ENCODE measurements at regions of chr9 and their contacts with region 1.

Region 1: GRCh38 chr9:72038890-72039410 is 21.5 kb downstream of the C9orf57 start:
- DNase-seq: peak; percentile 68 to 73
- H3K4me3 ChIP-seq: no peak overlapping the region
- H3K27ac ChIP-seq: no peak overlapping the region
- H3K4me1 ChIP-seq: no peaks in the 10 kb centered on the region
- H3K27me3 ChIP-seq: no peaks in the 10 kb centered on the region
- CTCF ChIP-seq: peak; percentile 84 to 93 (median 89)
- POLR2A ChIP-seq: no peak

Region 2: DNA sequence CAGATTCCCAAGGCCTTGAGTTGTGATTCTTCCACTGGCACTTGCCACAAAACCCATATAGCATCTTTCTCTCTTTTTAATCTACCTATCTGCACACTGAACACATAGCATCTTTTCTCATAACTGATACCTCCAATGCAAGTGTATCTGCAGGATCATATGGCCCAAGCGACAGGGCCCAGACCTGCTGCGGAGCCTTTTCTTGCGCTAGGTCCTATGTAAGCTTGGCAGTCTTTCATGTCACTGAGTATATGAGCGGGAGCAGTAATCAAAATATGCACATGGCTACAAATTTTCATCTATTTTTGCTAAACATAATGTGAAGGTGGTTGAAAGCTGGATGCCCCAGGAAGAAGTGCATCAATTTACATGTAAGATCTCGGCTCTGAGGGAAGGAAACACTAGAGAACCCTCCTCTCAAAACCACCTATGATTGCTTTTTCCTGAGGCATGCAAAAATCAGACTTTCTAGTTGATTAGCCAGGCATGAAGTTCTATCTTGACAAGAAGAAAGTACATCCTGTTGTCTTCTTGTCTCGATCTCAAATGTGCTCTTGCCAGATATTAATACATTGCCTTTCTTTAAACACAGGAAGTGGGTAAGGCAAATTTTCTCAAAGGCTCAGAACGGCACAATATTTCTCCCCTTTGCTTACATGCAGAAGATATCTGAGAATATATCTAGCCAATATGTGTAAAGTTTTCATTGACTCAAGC is 243.7 kb before region 1 on chr9:
- intact Hi-C with region 1: no loop called
- DNase-seq: no peak
- H3K4me3 ChIP-seq: no peak overlapping the region
- H3K27ac ChIP-seq: no peak overlapping the region
- H3K4me1 ChIP-seq: no peaks in the 10 kb centered on the region
- H3K27me3 ChIP-seq: no peaks in the 10 kb centered on the region
- CTCF ChIP-seq: no peak
- POLR2A ChIP-seq: no peak

Region 3: GRCh38 chr9:71984403-71984802 is 54.5 kb before region 1 on chr9:
- intact Hi-C with region 1: no loop called
- DNase-seq: no peak
- H3K4me3 ChIP-seq: no peak overlapping the region
- H3K27ac ChIP-seq: no peak overlapping the region
- H3K4me1 ChIP-seq: no peaks in the 10 kb centered on the region
- H3K27me3 ChIP-seq: no peaks in the 10 kb centered on the region
- CTCF ChIP-seq: no peak
- POLR2A ChIP-seq: no peak

Region 4: GRCh38 chr9:72278959-72279358 is 240.0 kb after region 1 on chr9:
- intact Hi-C with region 1: loop called (anchors 5 kb)
- DNase-seq: no peak
- H3K4me3 ChIP-seq: no peak overlapping the region
- H3K27ac ChIP-seq: no peak overlapping the region
- H3K4me1 ChIP-seq: no peaks in the 10 kb centered on the region
- H3K27me3 ChIP-seq: no peaks in the 10 kb centered on the region
- CTCF ChIP-seq: no peak
- POLR2A ChIP-seq: no peak